ENCODE measurements at regions of chr5 and their contacts with region 1.

Region 1: DNA sequence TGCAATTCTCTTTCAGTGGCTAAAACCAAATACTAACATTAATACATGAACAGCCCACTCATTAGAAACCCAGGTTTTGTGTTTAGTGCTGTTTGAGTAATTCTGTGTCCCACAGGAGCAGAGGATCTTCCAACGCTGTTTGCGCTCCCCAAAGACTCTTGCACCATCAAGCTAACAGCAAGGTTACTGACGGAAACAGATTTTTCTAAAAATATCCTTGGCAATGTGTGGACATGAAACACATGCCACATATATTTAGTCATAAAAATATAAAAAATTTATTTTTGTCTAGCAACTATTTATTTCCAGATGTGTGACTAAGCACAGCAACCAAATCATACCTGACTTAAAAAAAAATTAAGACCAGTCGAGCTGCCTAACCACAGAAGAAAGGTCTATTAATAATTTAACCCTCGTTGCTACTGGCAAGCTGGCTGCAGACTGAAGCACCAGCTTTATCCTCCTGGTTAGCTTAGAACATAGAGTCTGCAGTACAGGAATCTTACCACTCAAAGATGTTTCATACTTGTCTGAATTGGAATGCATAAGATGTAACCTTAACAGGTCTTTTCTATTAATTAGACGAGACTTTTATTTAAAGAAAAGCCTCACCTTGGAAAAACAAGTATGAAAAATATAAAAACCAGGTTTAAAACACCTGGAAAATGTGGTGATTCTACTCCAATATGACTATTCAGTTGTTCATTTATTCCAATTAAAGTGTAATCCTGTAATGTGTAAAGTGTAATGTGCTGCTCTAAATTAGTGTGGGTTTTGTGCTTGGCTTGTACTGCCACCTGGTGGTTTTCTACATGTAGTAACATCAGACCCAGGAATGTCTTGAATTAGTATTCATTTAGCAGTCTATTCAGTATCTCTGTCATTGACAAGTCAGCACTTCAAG is 272.5 kb downstream of the EPB41L4A start:
- DNase-seq: peak; percentile 81
- H3K4me3 ChIP-seq: no peak overlapping the region
- H3K27ac ChIP-seq: no peak overlapping the region
- H3K4me1 ChIP-seq: peaks cover 13% of the 10 kb centered on the region
- H3K27me3 ChIP-seq: no peaks in the 10 kb centered on the region
- CTCF ChIP-seq: peak; percentile 45 to 49
- POLR2A ChIP-seq: no peak

Region 2: GRCh38 chr5:111158105-111158744 is 988.4 kb before region 1 on chr5:
- CTCF ChIA-PET with region 1: interaction called, 9 read pairs
- POLR2A ChIA-PET with region 1: no interaction called
- dilution Hi-C with region 1: no loop called
- intact Hi-C with region 1: loop called (anchors 1 kb)
- DNase-seq: peak; percentile 84
- H3K4me3 ChIP-seq: no peak overlapping the region
- H3K27ac ChIP-seq: no peak overlapping the region
- H3K4me1 ChIP-seq: no peaks in the 10 kb centered on the region
- H3K27me3 ChIP-seq: no peaks in the 10 kb centered on the region
- CTCF ChIP-seq: peak; percentile 91 to 98
- POLR2A ChIP-seq: no peak

Region 3: DNA sequence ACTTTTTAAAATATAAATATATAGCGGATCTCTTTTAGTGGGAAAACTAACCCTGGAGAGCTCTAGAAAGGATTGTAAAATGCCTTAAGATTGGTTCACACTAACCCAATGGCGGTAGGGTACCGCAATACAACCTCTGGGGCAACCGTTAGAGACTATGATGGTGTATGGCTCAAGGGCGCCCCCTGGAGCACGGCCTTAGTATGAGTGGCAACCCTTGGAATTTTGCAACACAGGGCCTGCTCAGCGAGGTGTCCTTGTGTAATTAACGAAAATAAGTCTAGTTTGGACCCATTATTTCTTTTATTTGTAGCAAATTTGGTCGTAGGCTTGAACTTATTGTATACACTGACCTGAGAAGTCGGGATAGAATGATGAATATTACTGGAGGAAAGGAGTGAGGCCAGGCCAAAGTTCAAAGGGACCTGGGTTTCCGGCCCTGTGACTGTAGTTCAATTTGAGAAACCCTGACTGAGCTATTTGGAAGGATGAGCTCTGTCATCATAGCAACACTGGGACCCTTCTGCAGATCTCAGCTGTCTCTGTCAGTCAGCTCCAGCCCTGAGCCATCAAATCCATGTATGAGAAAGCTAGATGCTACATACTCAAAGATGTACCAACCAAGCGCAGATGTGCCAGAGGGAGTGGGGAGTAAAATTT is 867.6 kb before region 1 on chr5:
- CTCF ChIA-PET with region 1: no interaction called
- POLR2A ChIA-PET with region 1: no interaction called
- dilution Hi-C with region 1: no loop called
- intact Hi-C with region 1: loop called (anchors 2 kb)
- DNase-seq: peak; percentile 60
- H3K4me3 ChIP-seq: no peak overlapping the region
- H3K27ac ChIP-seq: no peak overlapping the region
- H3K4me1 ChIP-seq: no peaks in the 10 kb centered on the region
- H3K27me3 ChIP-seq: no peaks in the 10 kb centered on the region
- CTCF ChIP-seq: peak; percentile 82 to 87
- POLR2A ChIP-seq: no peak

Region 4: DNA sequence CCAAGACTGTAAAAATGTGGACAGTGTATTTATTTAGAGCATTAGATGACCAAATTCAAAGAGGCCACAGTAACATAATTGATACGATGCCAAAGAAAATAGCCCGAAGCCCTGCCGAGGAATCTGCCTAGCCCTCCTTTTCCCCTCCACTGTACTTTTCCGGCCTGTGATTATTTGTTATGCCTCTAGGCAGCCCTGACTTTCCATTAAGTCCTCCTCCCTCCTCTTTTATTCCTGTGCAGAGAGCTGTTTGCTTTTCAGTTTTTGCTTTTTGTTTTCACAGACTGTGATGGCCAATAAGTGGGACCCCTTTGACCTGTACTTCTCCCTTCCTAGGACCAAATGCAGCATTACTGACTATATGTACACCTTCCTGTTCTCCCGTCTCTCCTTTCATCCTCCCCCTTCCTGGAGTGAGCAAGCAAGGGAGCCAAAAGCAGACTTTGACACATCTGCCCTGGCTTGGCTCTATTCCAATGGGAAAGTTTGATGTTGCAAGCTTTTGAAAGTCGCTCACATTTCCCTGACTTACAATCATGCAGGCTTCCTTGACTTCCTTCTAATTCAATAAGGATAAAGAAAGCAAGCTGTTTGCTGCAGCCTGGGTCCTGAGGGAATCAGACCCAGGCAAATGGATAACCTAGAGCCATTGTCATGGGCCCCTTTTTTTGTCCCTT is 465.7 kb before region 1 on chr5:
- CTCF ChIA-PET with region 1: no interaction called
- POLR2A ChIA-PET with region 1: no interaction called
- dilution Hi-C with region 1: no loop called
- intact Hi-C with region 1: loop called (anchors 2 kb)
- DNase-seq: peak; percentile 99
- H3K4me3 ChIP-seq: peak overlapping the region in 1 of 3 experiments; percentile 13
- H3K27ac ChIP-seq: peak overlapping the region; percentile 94
- H3K4me1 ChIP-seq: peaks cover 27% of the 10 kb centered on the region
- H3K27me3 ChIP-seq: no peaks in the 10 kb centered on the region
- CTCF ChIP-seq: no peak
- POLR2A ChIP-seq: no peak

Region 5: GRCh38 chr5:111697881-111698757 is 448.5 kb before region 1 on chr5:
- CTCF ChIA-PET with region 1: no interaction called
- POLR2A ChIA-PET with region 1: no interaction called
- dilution Hi-C with region 1: no loop called
- intact Hi-C with region 1: loop called (anchors 1 kb)
- DNase-seq: peak; percentile 88
- H3K4me3 ChIP-seq: no peak overlapping the region
- H3K27ac ChIP-seq: peak overlapping the region; percentile 49
- H3K4me1 ChIP-seq: peaks cover 12% of the 10 kb centered on the region
- H3K27me3 ChIP-seq: no peaks in the 10 kb centered on the region
- CTCF ChIP-seq: peak; percentile 57 to 59
- POLR2A ChIP-seq: no peak

Region 6: GRCh38 chr5:112203229-112203628 is 56.7 kb after region 1 on chr5:
- CTCF ChIA-PET with region 1: no interaction called
- POLR2A ChIA-PET with region 1: no interaction called
- dilution Hi-C with region 1: no loop called
- intact Hi-C with region 1: no loop called
- DNase-seq: no peak
- H3K4me3 ChIP-seq: no peak overlapping the region
- H3K27ac ChIP-seq: no peak overlapping the region
- H3K4me1 ChIP-seq: no peaks in the 10 kb centered on the region
- H3K27me3 ChIP-seq: no peaks in the 10 kb centered on the region
- CTCF ChIP-seq: no peak
- POLR2A ChIP-seq: no peak